Dorsolateral prefrontal cortex (tissue), 120 donors: ENCODE measurements at regions of chr6 and their contacts with region 1.

Region 1: DNA sequence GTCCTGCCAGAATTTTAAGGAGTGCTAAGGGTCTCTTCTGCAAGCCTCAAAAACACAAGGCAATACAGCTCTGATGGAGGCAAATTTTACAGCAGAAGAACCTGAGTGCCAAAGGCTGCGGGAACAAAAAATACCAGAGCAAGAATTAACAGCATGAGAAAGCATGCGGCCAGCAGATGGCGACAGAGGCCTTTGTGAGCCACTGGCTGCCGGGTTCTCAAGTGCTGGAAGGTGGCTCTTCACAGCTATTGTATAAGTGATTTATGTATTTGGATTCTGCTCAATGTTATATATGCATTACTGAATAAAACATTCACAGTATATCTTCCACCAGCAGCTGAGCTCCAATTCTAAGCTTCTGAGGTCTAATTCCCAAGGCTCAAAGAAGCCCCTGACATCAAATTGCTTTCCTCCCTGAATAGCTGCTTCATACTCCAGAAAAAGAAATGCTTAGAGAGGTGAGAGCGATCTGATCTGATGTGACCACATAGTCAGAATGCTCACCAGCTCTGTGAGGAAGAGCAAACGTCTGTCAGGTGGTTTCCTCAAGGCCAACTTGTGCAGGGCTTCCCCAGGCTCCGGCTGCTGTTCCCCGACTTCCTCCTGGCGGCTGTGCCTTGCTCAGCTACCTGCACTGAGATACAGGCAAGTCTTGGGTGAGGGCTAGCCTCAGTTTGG is 58.6 kb downstream of the PPP1R3G start:
- DNase-seq: peak; percentile 85 to 95 (median 90)
- H3K4me3 ChIP-seq: peak overlapping the region in 1 of 59 donors; percentile 4
- H3K27ac ChIP-seq: peak overlapping the region in 14 of 59 donors; percentile 0 to 76 (median 42)
- H3K27me3 ChIP-seq: no peaks in the 10 kb centered on the region
- CTCF ChIP-seq: peak in 55 of 56 donors; percentile 90 to 99 (median 96)

Region 2: DNA sequence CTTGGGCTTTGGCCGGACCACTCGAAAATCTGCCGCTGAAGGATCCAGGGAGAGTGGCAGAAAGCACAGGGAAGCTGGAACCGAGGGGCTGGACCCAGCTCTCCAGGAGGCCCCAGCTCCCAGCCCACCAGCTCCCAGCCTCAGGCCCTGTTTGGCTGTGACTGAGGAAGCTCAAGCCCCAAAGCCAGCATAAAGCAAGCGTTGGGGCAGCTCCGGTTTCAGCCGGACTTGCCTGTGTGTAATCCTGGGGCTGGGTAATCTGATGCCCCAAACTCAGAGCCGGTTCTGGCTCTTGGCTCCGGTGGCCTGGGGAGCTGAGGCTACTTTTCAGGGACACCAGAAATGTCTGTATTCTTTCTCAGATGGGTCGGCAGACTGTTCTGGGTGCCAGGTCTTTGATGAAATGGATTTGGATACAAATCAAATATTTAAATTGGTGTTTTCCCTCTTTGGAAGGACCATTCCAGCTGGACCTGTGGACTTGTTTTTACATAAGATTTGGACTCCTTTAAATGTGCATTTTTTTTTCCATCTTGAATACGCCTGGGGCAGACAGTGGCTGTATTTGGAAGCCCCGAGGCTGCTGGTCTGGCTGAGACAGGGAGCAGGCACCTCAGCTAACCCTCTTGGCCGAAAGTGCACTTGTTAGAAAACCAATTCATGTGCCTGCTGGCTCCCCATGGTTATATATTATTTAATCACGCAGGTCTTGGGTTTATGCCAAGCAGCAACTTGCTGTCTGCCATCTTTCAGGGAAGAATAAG is 169.6 kb before region 1 on chr6:
- intact Hi-C with region 1: no loop called
- DNase-seq: no peak
- H3K4me3 ChIP-seq: no peak overlapping the region
- H3K27ac ChIP-seq: no peak overlapping the region
- H3K27me3 ChIP-seq: no peaks in the 10 kb centered on the region
- CTCF ChIP-seq: no peak

Region 3: DNA sequence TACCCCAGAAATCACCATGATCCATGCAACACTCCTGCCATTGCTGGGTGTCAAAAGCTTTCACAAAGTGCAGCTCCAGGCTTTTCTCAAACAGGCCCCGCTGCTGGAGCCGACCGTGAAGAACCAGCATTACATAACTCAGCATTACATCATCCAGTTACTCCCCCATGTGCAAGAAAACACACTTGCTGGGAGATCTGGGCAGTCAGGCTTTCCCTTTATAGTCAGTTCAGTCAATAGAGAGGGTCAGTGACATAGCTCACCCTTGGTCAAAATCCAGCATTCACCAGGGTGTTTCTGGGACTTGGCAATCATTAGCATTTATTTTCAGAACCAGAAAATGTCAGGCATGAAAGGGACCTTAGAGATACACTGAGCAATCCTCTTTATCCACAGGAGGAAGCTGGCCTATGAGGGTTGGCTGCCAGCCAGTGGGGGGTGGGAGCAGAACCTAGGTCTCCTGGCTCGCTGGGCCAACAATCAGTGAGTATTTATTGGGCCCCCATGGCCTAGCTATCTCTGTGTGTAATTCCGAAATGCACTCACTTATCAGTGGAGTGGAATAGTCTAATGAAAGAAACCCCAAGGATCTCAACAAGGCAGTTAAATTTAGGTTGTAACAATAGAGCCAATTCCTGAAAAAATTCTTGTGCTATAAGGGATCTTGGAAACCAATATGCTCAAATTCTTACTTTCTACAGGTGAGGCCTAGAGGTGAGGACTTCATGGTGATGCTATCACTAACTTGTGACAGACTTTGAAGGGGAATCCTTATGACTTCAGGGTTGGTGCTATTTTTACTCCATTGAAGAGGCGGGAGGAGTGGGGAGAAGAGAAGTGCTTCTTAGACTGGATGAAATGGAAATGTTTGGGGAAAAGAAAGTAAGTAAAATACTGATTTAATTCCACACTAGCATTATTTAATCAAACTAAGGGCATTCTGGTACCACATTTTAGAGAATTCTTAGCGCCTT is 62.4 kb after region 1 on chr6:
- intact Hi-C with region 1: loop called in 1 of 2 experiments (anchors 2 kb)
- DNase-seq: peak; percentile 54 to 84 (median 74)
- H3K4me3 ChIP-seq: peak overlapping the region in 14 of 59 donors; percentile 3 to 31 (median 14)
- H3K27ac ChIP-seq: peak overlapping the region; percentile 63 to 99 (median 96)
- H3K27me3 ChIP-seq: no peaks in the 10 kb centered on the region
- CTCF ChIP-seq: peak in 20 of 56 donors; percentile 8 to 43 (median 26)

Region 4: GRCh38 chr6:5260661-5261544 is 117.1 kb after region 1 on chr6 and contains the starts of genes FARS2 and LYRM4:
- intact Hi-C with region 1: loop called (anchors 5 kb)
- DNase-seq: peak; percentile 74 to 92 (median 88)
- H3K4me3 ChIP-seq: peak within 1 kb of the TSS; percentile 71 to 99 (median 90)
- H3K27ac ChIP-seq: peak within 1 kb of the TSS; percentile 84 to 100 (median 98)
- H3K27me3 ChIP-seq: no peaks in the 10 kb centered on the region
- CTCF ChIP-seq: peak in 38 of 56 donors; percentile 2 to 63 (median 32)
- total RNA-seq, gene FARS2: 16.9 to 38.4 (median 25.4) TPM
- total RNA-seq, gene LYRM4: 23.8 to 53.4 (median 36.9) TPM

Region 5: GRCh38 chr6:5325173-5325572 is 181.4 kb after region 1 on chr6:
- intact Hi-C with region 1: loop called in 1 of 2 experiments (anchors 10 kb)
- DNase-seq: peak; percentile 22 to 83 (median 80)
- H3K4me3 ChIP-seq: peak overlapping the region in 4 of 59 donors; percentile 5 to 16 (median 8)
- H3K27ac ChIP-seq: peak overlapping the region in 30 of 59 donors; percentile 1 to 71 (median 33)
- H3K27me3 ChIP-seq: no peaks in the 10 kb centered on the region
- CTCF ChIP-seq: peak in 55 of 56 donors; percentile 17 to 82 (median 63)

Region 6: DNA sequence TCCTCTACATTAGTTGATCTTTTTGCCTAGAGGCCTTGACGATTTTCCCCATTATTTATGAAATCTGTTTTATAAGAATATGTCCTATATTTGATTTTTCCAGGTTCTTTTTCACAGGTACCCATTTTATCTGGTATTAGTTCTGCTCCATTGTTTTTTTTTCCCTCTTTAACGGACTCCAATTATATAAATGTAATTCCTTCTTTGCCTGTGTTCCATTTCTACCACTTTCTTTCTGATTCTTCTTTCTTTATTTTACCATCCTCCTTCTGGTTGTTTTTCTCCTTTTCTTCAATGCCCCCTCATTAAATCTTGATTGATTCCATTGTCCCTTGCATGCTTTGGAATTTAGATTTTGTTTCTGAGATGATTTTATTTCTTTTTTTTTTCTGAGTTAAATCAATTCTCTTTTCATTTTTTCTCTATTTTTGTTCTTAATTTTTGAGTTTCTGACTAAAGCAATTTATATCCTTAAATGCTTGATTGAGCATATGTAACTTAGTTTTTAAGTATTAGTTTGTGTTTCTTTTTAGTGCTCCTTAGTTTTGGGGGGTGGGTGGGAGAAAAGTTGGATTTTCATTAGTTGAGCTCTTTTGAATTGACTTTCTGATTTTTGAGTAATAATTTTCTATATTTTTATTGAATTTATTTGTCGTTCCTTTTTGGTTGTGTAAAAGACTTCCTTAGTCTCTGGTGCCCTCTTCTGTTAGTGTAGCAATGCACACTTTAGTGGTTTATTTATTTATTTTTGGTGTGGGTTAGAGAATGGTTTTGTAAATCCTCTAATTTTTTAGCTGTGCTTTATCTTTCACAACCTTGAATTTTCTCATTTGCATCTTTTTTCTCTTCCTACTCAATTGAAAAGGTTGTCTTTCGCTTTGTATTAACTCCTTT is 258.3 kb after region 1 on chr6:
- intact Hi-C with region 1: loop called (anchors 5 kb)
- DNase-seq: no peak
- H3K4me3 ChIP-seq: no peak overlapping the region
- H3K27ac ChIP-seq: no peak overlapping the region
- H3K27me3 ChIP-seq: no peaks in the 10 kb centered on the region
- CTCF ChIP-seq: peak in 53 of 56 donors; percentile 26 to 71 (median 47)

Region 7: GRCh38 chr6:5782783-5783547 is 639.2 kb after region 1 on chr6:
- intact Hi-C with region 1: no loop called
- DNase-seq: peak in 8 of 10 donors; percentile 33 to 78 (median 59)
- H3K4me3 ChIP-seq: peak overlapping the region in 6 of 59 donors; percentile 5 to 31 (median 17)
- H3K27ac ChIP-seq: peak overlapping the region in 8 of 59 donors; percentile 8 to 48 (median 14)
- H3K27me3 ChIP-seq: no peaks in the 10 kb centered on the region
- CTCF ChIP-seq: peak in 1 of 56 donors; percentile 16

Region 8: DNA sequence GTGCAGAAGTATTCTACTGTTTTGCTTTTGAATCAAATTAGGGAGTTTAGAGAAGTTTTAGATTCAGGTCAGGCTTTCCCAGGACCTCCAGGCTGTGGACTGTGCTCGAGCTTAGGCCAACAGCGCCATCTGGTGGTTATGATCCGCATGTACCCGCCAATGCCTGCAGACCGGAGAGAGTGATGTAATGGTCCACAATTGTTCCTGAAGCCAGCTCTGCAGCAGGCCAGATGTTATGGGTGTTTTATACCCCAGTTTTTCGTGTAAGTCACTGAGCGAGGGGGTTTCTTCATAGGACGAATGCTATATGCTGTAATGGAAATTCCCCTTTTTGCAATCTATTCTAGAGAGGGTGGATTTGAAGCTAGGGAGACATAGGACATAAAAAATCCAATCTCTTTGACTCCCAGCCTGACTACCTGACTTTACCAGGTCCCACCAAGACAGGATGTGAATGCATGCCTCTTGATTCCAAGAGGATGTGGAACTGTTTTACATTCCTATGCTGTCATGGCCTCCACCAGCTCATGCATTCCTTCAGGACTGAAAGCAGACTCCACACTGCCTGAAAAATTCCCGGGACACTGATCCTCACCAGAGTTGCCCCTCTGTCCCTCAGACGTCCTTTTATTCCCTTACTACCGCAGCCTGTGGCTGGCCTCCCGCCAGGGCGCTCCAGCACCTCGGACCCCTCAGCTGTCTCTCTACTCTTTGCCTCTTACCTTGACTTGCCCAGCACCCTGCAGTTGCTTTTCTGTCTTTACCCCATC is 1403.5 kb after region 1 on chr6:
- intact Hi-C with region 1: loop called in 1 of 2 experiments (anchors 2 kb)
- DNase-seq: peak; percentile 80 to 94 (median 89)
- H3K4me3 ChIP-seq: peak overlapping the region; percentile 42 to 78 (median 60)
- H3K27ac ChIP-seq: peak overlapping the region in 46 of 59 donors; percentile 6 to 88 (median 76)
- H3K27me3 ChIP-seq: peaks cover 0 to 6% (median 0%) of the 10 kb centered on the region in 45 donors
- CTCF ChIP-seq: peak; percentile 94 to 99 (median 97)